ENCODE measurements at regions of chr6 and their contacts with region 1.

Region 1: DNA sequence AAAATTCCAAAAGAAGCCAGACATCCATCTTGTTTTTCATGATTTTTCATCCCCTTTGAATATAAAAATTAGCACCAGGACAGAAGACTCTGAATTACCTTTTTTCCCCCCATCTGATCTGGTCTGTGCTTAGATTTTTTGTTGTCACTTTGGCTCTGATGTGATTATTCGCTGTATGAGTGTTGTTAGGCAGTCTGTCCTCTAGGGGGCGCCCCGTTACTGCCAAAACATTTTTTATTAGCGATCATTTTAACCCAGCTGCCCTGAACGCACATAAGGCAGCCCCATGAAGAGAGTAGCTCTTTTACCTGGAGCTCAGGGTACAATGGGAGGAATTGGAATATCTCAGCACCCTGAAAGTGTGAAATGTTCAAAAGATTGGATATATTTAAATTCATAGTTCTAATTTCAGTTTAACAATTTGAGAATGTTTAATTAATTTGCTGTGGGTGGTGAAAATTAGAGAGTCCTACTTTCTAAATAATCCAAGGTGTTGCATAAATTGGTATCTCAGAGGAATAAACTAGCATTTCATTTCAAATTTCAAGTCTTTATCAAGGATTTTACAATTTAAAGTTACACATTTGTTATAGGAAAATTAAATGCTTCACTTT is 60.8 kb downstream of the PRPH2 start:
- DNase-seq: peak; percentile 84
- ATAC-seq: peak; percentile 93
- H3K4me3 ChIP-seq: no peak overlapping the region
- H3K4me3 Mint-ChIP-seq: no peak overlapping the region
- H3K27ac ChIP-seq: peak overlapping the region in 1 of 2 donors; percentile 5
- H3K27ac Mint-ChIP-seq: no peak overlapping the region
- H3K4me1 ChIP-seq: no peaks in the 10 kb centered on the region
- H3K4me1 Mint-ChIP-seq: no peaks in the 10 kb centered on the region
- H3K27me3 ChIP-seq: no peaks in the 10 kb centered on the region
- H3K27me3 Mint-ChIP-seq: no peaks in the 10 kb centered on the region
- CTCF ChIP-seq: peak; percentile 91

Region 2: GRCh38 chr6:42555477-42556457 is 105.9 kb before region 1 on chr6:
- CTCF ChIA-PET with region 1: no interaction called
- POLR2A ChIA-PET with region 1: no interaction called
- intact Hi-C with region 1: no loop called
- DNase-seq: no peak
- ATAC-seq: no peak
- H3K4me3 ChIP-seq: no peak overlapping the region
- H3K4me3 Mint-ChIP-seq: no peak overlapping the region
- H3K27ac ChIP-seq: no peak overlapping the region
- H3K27ac Mint-ChIP-seq: no peak overlapping the region
- H3K4me1 ChIP-seq: peaks cover 0 to 5% of the 10 kb centered on the region in 2 donors
- H3K4me1 Mint-ChIP-seq: peaks cover 4% of the 10 kb centered on the region
- H3K27me3 ChIP-seq: peaks cover 0 to 7% (median 0%) of the 10 kb centered on the region in 4 experiments
- H3K27me3 Mint-ChIP-seq: peaks cover 7% of the 10 kb centered on the region
- CTCF ChIP-seq: no peak

Region 3: GRCh38 chr6:42674780-42675179 is 13.1 kb after region 1 on chr6:
- CTCF ChIA-PET with region 1: interaction called, 10 read pairs
- POLR2A ChIA-PET with region 1: no interaction called
- intact Hi-C with region 1: no loop called
- DNase-seq: no peak
- ATAC-seq: no peak
- H3K4me3 ChIP-seq: no peak overlapping the region
- H3K4me3 Mint-ChIP-seq: no peak overlapping the region
- H3K27ac ChIP-seq: no peak overlapping the region
- H3K27ac Mint-ChIP-seq: no peak overlapping the region
- H3K4me1 ChIP-seq: no peaks in the 10 kb centered on the region
- H3K4me1 Mint-ChIP-seq: no peaks in the 10 kb centered on the region
- H3K27me3 ChIP-seq: no peaks in the 10 kb centered on the region
- H3K27me3 Mint-ChIP-seq: no peaks in the 10 kb centered on the region
- CTCF ChIP-seq: no peak

Region 4: GRCh38 chr6:42901536-42901957 is 239.9 kb after region 1 on chr6:
- CTCF ChIA-PET with region 1: interaction called, 68 read pairs
- POLR2A ChIA-PET with region 1: no interaction called
- intact Hi-C with region 1: loop called (anchors 1 kb)
- DNase-seq: peak; percentile 88
- ATAC-seq: peak; percentile 99
- H3K4me3 ChIP-seq: no peak overlapping the region
- H3K4me3 Mint-ChIP-seq: no peak overlapping the region
- H3K27ac ChIP-seq: no peak overlapping the region
- H3K27ac Mint-ChIP-seq: no peak overlapping the region
- H3K4me1 ChIP-seq: peaks cover 5 to 8% of the 10 kb centered on the region in 2 donors
- H3K4me1 Mint-ChIP-seq: peaks cover 10% of the 10 kb centered on the region
- H3K27me3 ChIP-seq: no peaks in the 10 kb centered on the region
- H3K27me3 Mint-ChIP-seq: no peaks in the 10 kb centered on the region
- CTCF ChIP-seq: peak; percentile 93

Region 5: GRCh38 chr6:43143235-43144124 is 481.8 kb after region 1 on chr6:
- CTCF ChIA-PET with region 1: interaction called, 7 read pairs
- POLR2A ChIA-PET with region 1: no interaction called
- intact Hi-C with region 1: loop called (anchors 1 kb)
- DNase-seq: peak; percentile 76
- ATAC-seq: peak; percentile 93
- H3K4me3 ChIP-seq: peak overlapping the region in 1 of 5 experiments; percentile 3
- H3K4me3 Mint-ChIP-seq: no peak overlapping the region
- H3K27ac ChIP-seq: no peak overlapping the region
- H3K27ac Mint-ChIP-seq: no peak overlapping the region
- H3K4me1 ChIP-seq: peaks cover 7 to 8% of the 10 kb centered on the region in 2 donors
- H3K4me1 Mint-ChIP-seq: peaks cover 8% of the 10 kb centered on the region
- H3K27me3 ChIP-seq: peaks cover 0 to 4% (median 0%) of the 10 kb centered on the region in 4 experiments
- H3K27me3 Mint-ChIP-seq: peaks cover 9% of the 10 kb centered on the region
- CTCF ChIP-seq: peak; percentile 87